Left colon (tissue), 2 donors: ENCODE measurements at regions of chr3 and their contacts with region 1.

Region 1: GRCh38 chr3:169668957-169669681 is 5.6 kb upstream of the MECOM start:
- DNase-seq: peak; percentile 75 to 83
- ATAC-seq: peak; percentile 91

Region 2: GRCh38 chr3:169041677-169042171 is 627.4 kb before region 1 on chr3:
- intact Hi-C with region 1: loop called in 1 of 2 experiments (anchors 5 kb)
- DNase-seq: no peak
- ATAC-seq: peak; percentile 61